AG04450 (cell line): ENCODE measurements at regions of chr6 and their contacts with region 1.

Region 1: DNA sequence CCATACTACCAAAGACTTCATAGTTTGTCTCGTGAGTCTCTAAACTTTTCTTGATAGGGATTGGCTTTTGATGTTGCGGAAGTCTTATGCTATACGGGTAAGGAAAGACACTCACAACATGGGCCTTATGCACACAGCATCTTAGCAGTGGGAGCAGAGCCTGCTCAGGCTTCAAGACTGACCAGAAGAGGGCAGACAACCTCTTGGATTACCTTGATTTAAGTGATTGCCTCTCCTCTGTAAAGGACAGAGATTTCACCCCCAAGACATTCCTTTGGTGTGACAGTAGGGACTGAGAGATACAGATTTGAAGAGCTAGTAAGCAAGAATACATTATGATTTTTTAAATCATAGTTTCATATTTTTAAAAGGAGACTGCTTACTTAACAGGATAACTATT is 71.0 kb upstream of the SAMD3 start:
- DNase-seq: peak; percentile 44
- H3K4me3 ChIP-seq: no peak overlapping the region
- H3K27ac ChIP-seq: no peak overlapping the region
- H3K27me3 ChIP-seq: no peaks in the 10 kb centered on the region
- CTCF ChIP-seq: peak; percentile 80

Region 2: DNA sequence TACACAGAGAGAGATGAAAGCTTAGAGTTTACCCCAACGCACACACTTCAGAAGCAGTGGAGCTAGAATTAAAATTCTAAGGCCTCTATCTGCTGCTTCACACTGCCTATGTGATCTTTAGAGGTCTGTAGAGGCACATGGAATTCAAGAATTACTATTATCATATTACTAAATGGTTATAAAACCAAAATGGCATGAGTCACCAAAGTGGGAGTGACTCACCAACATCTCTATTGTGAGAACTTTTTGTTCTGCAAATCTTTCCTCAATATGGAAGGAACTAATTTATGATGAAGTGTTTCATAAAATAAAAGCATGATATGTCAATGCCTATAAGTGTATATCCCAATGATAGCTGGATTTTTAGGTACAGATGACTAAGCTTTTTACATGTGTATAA is 404.2 kb before region 1 on chr6:
- CTCF ChIA-PET with region 1: no interaction called
- POLR2A ChIA-PET with region 1: no interaction called
- DNase-seq: peak; percentile 42
- H3K4me3 ChIP-seq: no peak overlapping the region
- H3K27ac ChIP-seq: no peak overlapping the region
- H3K27me3 ChIP-seq: no peaks in the 10 kb centered on the region
- CTCF ChIP-seq: no peak

Region 3: DNA sequence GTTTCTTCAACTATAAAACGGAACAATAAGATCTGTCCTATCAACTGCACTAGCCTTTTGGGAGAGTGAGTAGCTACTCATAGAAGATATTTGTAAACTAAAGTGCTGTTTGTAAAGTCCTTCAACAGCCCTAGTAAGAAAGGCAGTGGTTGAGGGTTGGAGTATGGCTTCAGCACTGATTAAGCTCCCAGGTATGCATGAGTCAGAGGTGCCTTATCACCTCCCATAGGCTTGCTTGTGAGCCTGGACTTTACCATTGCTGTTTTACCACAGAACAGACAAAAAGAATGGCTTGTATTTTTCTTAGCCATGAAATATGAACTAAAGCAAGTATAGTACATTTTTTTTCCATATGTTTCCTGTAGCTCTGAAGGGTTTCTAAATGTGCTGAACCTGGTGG is 115.1 kb before region 1 on chr6:
- CTCF ChIA-PET with region 1: no interaction called
- POLR2A ChIA-PET with region 1: no interaction called
- DNase-seq: peak; percentile 74
- H3K4me3 ChIP-seq: no peak overlapping the region
- H3K27ac ChIP-seq: no peak overlapping the region
- H3K27me3 ChIP-seq: no peaks in the 10 kb centered on the region
- CTCF ChIP-seq: no peak

Region 4: DNA sequence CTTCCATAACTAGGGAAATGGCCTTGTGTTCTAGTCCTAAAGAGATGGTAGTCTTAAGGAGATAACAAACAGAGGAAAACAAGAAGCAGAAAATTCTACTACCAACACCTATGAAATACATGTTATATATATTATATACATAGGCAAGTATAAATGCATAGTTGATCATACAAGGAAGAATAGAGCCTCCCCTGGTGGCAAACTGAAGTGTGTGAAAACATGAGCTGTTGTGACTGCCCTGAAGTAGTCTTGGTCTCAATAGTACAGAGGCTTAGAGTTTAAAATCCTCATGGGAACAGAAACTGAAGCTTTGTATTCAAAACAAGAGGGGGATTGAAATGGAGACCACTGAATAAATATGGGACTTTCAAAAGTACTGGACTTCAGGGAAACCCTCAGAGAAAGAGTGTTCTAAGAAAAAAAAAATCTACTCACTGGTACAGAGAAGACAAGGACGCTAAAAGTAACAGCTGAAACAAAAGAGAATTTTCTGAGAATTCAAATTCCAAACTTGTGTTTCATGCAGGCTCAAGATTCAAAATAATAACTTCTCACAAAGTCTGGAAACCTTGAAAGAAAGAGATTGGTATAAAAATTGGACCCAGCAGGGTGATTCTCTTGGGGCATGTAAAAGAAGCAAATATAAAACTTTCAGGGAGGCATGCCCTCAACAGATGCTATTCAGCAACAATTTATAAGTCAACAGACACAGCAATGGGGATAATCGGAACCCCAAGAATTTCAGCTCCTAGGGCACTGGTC is 11.4 kb before region 1 on chr6:
- CTCF ChIA-PET with region 1: interaction called, 33 read pairs
- POLR2A ChIA-PET with region 1: no interaction called
- DNase-seq: peak; percentile 11
- H3K4me3 ChIP-seq: no peak overlapping the region
- H3K27ac ChIP-seq: no peak overlapping the region
- H3K27me3 ChIP-seq: no peaks in the 10 kb centered on the region
- CTCF ChIP-seq: peak; percentile 72

Region 5: DNA sequence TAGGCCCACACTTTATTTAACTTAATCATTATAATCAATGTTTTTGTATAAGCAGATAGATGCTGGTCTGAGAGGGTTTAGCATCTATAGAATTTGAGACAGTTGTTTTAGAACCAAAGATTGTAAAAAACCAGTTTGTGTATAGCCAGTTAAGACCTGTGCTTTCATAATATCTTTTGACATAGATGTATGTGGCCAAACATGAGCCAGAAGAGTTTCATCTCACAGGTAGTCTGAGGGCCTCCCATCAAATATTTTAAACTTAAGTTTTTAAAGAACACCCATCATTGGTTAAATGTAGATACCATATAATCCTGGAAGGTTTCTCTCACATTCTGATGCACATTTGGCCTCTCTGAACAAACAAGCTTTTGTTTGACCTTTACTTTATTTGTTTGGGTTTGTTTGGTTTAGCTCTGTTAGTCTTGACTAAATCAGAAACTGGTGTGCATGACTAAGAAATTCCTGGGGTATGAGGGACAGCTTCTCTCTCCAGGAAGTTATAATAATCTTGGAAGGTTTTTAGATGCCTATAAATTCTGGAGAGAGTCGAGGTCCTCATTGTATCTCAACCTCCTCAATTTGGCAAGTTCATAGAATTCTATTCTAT is 14.1 kb after region 1 on chr6:
- CTCF ChIA-PET with region 1: interaction called, 39 read pairs
- POLR2A ChIA-PET with region 1: no interaction called
- DNase-seq: peak; percentile 69
- H3K4me3 ChIP-seq: no peak overlapping the region
- H3K27ac ChIP-seq: no peak overlapping the region
- H3K27me3 ChIP-seq: no peaks in the 10 kb centered on the region
- CTCF ChIP-seq: no peak

Region 6: GRCh38 chr6:130322673-130323268 is 29.0 kb after region 1 on chr6:
- CTCF ChIA-PET with region 1: interaction called, 11 read pairs
- POLR2A ChIA-PET with region 1: no interaction called
- DNase-seq: peak; percentile 52
- H3K4me3 ChIP-seq: no peak overlapping the region
- H3K27ac ChIP-seq: no peak overlapping the region
- H3K27me3 ChIP-seq: no peaks in the 10 kb centered on the region
- CTCF ChIP-seq: peak; percentile 94

Region 7: GRCh38 chr6:130396722-130397121 is 102.9 kb after region 1 on chr6:
- CTCF ChIA-PET with region 1: no interaction called
- POLR2A ChIA-PET with region 1: no interaction called
- DNase-seq: no peak
- H3K4me3 ChIP-seq: peak overlapping the region; percentile 14; the same call in 1 of the 2 replicates
- H3K27ac ChIP-seq: no peak overlapping the region
- H3K27me3 ChIP-seq: no peaks in the 10 kb centered on the region
- CTCF ChIP-seq: no peak

Region 8: GRCh38 chr6:130697995-130698535 is 404.3 kb after region 1 on chr6:
- CTCF ChIA-PET with region 1: interaction called, 14 read pairs
- POLR2A ChIA-PET with region 1: no interaction called
- DNase-seq: peak; percentile 36
- H3K4me3 ChIP-seq: no peak overlapping the region
- H3K27ac ChIP-seq: no peak overlapping the region
- H3K27me3 ChIP-seq: no peaks in the 10 kb centered on the region
- CTCF ChIP-seq: peak; percentile 93

Region 9: DNA sequence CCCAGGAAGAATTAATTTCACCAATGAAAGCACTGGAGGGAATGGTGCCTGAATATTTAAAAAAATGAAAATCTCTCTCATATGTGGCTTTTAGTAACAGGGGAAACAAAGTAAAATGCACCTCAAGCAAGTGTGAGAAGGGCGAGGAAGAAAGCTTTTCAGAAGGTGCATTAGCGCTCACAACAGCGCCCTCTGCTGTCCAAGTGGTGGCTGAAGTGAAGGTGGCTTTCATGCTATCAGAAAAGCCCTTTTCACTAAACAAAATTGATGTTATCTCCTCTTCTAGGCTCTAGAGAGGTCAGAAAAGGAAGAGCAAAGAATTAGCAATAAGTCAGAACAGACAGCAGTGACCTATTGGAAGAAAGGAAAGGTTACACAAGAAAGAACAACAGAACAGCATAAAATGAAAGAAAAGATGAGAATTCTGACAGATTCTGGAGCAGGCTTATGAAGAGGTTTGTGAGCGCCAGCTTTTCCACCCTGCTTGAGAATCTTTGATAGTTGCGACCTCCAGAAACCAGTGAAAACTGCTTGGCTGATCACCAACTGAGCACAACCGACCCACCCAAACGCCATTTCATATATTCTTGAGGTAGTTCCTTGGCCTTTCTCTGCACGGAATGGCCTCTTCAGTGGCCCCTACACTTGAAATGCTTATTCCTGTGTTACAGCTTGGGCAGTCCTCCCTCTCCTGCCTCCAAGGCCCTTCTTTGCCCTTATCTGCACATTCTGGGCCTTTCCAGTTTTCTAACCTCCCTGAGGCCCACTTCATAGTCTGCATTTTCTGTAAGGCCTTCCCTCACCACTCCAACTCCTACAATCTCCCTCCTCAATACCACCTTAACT is 578.7 kb after region 1 on chr6:
- CTCF ChIA-PET with region 1: interaction called, 18 read pairs
- POLR2A ChIA-PET with region 1: no interaction called
- DNase-seq: no peak
- H3K4me3 ChIP-seq: no peak overlapping the region
- H3K27ac ChIP-seq: no peak overlapping the region
- H3K27me3 ChIP-seq: no peaks in the 10 kb centered on the region
- CTCF ChIP-seq: peak; percentile 95